GM12878 (cell line): ENCODE measurements at regions of chr17 and their contacts with region 1.

Region 1: DNA sequence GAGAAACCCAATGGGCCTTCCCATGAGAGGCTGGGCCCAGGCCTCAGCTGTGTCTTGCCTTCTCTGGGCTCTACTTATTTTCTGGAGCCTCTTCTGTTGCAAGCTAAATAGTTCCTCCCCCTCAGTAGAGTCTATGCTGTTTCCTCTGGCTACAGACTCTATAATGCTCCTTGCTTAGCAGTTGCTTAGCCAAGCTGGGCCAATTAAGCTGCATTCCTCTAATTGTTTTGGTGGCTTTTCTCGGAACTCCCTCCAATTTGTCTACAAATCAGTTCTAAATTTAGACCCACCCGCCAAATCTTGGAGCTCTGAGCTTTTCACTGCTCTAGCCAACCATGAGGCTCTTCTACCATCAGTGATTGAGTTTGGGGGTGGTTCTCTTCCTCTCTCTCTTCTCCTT is 302.7 kb upstream of the ASIC2 start:
- DNase-seq: no peak
- ATAC-seq: no peak
- H3K4me3 ChIP-seq: no peak overlapping the region
- H3K27ac ChIP-seq: no peak overlapping the region
- H3K4me1 ChIP-seq: no peaks in the 10 kb centered on the region
- H3K27me3 ChIP-seq: no peaks in the 10 kb centered on the region; a peak in 2 of 4 replicates
- CTCF ChIP-seq: no peak
- EP300 ChIP-seq: no peak
- POLR2A ChIP-seq: no peak
- RAD21 ChIP-seq: no peak

Region 2: DNA sequence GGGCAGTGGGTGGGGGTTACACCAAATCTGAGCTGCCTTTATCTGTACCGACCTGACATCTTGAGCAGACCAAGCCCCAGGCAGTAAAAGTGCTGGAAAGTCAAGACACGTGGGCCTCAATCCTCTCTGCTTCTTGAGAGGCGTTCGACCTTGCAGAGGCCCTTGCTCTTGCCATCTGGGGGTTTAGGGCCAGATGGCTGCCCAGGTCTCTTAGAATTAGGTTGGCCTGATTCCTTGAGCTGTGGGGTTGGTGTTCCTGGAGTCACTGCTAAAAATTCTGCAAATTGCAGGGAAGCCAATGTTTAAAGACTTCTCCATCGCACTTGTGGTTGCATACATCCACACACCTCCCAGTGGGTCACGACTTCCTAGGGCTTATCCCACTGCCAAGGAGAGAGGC is 64.5 kb before region 1 on chr17:
- CTCF ChIA-PET with region 1: no interaction called
- POLR2A ChIA-PET with region 1: no interaction called
- RAD21 ChIA-PET with region 1: no interaction called
- SMC1A ChIA-PET with region 1: no interaction called
- in situ Hi-C with region 1: loop called (anchors 10 kb)
- intact Hi-C with region 1: no loop called
- DNase-seq: no peak
- ATAC-seq: no peak
- H3K4me3 ChIP-seq: no peak overlapping the region
- H3K27ac ChIP-seq: no peak overlapping the region
- H3K4me1 ChIP-seq: no peaks in the 10 kb centered on the region
- H3K27me3 ChIP-seq: peaks cover 0 to 4% of the 10 kb centered on the region in 2 experiments; a peak in 1 of 4 replicates
- CTCF ChIP-seq: no peak
- EP300 ChIP-seq: no peak
- POLR2A ChIP-seq: no peak
- RAD21 ChIP-seq: no peak

Region 3: GRCh38 chr17:33686171-33686570 is 90.3 kb after region 1 on chr17:
- CTCF ChIA-PET with region 1: no interaction called
- POLR2A ChIA-PET with region 1: no interaction called
- RAD21 ChIA-PET with region 1: no interaction called
- SMC1A ChIA-PET with region 1: no interaction called
- in situ Hi-C with region 1: no loop called
- intact Hi-C with region 1: no loop called
- DNase-seq: no peak
- ATAC-seq: peak; percentile 61; the same call in 2 of the 3 replicates
- H3K4me3 ChIP-seq: no peak overlapping the region
- H3K27ac ChIP-seq: no peak overlapping the region
- H3K4me1 ChIP-seq: no peaks in the 10 kb centered on the region
- H3K27me3 ChIP-seq: no peaks in the 10 kb centered on the region
- CTCF ChIP-seq: peak; percentile 41 to 50 (median 48); a peak in 5 of 6 replicates
- EP300 ChIP-seq: no peak
- POLR2A ChIP-seq: no peak
- RAD21 ChIP-seq: no peak